Common myeloid progenitor, CD34-positive (primary cell): ENCODE measurements at regions of chr1 and their contacts with region 1.

Region 1: DNA sequence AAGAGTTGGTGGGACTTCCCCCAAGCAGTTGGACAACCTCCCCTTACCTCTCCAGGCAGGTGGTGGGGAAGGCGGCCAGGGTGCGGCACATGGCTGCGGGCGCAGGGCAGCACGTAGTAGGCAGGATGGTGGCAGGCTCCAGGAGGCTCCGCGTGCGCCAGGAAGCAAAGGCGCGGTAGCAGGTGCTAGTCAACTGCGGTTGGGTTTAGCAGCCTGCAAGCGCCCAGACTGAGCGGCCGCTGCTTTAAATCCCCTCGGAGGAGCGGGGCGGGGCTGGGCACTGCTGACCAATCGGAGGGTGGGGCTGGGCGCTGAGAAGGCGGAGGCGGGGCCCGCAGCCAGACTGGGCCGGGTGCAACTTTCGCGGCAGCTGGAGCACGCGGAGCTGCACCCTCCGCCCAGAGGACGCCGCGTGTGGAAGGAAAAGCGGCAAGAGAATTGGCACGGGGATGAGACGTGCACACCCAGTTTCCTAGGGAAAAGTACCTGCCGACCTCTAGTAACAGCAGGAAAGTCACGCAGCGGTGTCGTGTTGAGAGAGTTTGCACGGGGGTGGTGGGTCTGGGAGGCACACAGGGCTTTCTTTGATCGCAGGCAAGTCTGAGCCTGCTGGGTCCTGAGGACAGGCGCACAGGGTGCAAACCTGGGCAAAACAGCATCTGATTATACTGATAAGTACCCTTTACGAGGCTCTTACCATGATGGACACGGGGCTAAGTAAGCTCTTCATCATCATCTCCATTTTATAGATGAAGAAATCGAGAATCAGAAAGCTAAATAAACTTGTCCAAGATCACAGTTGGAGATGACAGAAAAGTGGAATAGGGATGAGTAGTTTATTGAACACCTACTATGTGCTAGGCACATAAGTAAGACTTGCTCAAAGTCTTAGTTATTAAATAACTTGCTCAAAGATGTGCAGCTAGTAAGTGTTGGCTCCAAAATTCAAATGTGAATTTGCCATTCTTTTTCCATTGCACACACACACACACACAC is at the start of gene RGS16:
- DNase-seq: peak; percentile 63 to 84 (median 82)
- H3K4me3 ChIP-seq: peak within 1 kb of the TSS in 6 of 7 experiments; percentile 16 to 69 (median 41)
- H3K27ac ChIP-seq: no peak within 1 kb of the TSS
- H3K4me1 ChIP-seq: peaks cover 0 to 16% (median 11%) of the 10 kb centered on the region in 4 experiments
- H3K27me3 ChIP-seq: peaks cover 0 to 21% (median 13%) of the 10 kb centered on the region in 5 experiments

Region 2: GRCh38 chr1:182568647-182569284 is 35.7 kb before region 1 on chr1:
- CTCF ChIA-PET with region 1: no interaction called
- POLR2A ChIA-PET with region 1: no interaction called
- DNase-seq: no peak
- H3K4me3 ChIP-seq: no peak overlapping the region
- H3K27ac ChIP-seq: no peak overlapping the region
- H3K4me1 ChIP-seq: no peaks in the 10 kb centered on the region
- H3K27me3 ChIP-seq: peaks cover 0 to 2% (median 0%) of the 10 kb centered on the region in 5 experiments

Region 3: DNA sequence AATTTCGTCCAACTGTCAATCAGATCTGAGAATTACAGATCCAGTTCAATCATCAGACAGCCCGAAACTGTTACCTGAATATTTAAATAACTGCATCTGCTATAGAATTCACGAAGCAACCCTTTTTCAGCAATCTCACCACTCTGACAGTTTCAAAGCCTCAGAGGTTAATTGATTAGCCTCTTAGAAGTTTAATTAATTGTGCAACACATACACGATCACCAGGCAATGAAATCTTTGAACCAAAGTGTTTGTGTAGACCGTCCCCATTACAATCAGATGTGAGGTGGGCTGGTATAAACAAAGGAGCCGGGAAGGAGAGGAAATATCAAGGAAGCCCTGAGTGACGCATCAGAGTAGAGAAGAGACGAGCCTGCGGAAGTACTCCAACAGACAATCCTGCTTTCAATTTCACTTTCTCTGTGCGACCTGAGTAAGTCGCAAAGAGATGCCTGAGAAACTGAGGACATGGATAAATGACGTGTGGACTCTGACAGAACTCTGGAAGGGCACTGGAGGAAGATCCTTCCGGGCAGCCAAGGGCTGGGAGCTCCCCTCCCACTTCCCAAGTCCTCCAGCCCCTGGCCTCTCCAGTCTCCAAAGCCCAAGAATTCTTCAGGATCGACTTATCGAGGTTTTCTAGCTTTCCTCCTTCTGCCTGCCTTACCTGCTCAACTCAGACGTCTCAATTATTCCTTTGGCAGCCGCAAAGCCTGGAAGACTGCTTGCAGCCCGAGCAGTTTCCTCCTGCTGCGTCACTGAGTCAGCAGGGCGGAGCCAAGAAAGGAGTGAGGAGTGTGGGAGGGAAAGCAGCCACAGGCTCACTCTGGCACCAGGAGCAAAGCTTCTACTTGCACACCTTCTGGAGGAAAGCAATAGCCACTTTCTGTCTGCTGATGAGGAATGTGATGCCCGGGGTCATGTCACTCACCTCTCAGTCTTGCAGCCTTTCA is 15.7 kb before region 1 on chr1 and contains the start of gene RNASEL:
- CTCF ChIA-PET with region 1: interaction called, 157 read pairs
- POLR2A ChIA-PET with region 1: no interaction called
- DNase-seq: peak; percentile 62 to 88 (median 81)
- H3K4me3 ChIP-seq: peak within 1 kb of the TSS; percentile 78 to 99 (median 96)
- H3K27ac ChIP-seq: peak within 1 kb of the TSS; percentile 86 to 95
- H3K4me1 ChIP-seq: peaks cover 0 to 19% (median 9%) of the 10 kb centered on the region in 4 experiments
- H3K27me3 ChIP-seq: no peaks in the 10 kb centered on the region

Region 4: DNA sequence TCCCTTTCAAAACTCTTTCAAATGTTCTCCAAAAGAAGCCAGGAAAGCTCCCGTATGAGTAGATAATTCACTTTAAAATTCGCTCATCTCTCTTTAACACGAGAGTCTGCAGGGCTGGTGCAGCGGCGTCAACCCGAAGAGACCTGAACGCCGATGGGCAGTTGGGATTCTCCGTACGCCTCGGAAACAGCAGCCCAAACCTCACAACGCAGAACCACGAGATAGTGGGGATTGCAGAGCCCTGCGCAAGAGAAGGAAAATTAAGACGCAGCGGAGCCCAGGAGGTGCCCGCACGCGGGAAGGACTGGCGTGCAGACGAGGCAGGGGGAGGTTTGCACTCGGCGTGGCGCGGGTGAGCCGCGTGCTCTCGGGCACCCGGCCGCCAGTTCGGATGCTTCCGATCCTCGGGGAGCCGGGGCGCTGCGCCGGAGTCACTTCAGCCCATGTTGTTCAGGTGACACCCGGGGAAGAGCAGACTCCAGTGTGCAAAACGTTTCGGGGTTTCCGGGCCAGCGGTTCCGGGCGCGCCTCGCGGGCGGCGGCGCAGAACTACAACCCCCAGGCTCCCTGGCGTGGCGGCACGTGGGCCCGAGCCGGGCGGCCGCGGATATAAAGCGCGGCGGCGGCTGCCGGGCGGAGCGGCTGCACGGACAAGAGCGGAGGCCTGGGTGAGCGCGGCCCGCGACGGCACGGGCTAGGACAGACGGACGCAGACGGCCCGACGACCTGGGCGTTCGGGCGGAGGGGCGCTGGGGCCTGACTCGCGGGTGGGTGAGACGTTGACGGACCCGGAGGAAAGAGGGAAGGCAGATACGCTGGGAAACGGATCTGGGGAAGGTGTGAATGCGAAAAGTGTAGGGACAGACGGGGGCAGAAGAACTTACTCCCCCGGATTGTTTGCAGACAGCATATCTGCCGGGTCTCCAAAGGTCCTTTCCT is 184.9 kb after region 1 on chr1 and contains the start of gene NPL:
- CTCF ChIA-PET with region 1: interaction called, 525 read pairs
- POLR2A ChIA-PET with region 1: interaction called, 4 read pairs
- DNase-seq: peak; percentile 66 to 77 (median 70)
- H3K4me3 ChIP-seq: peak within 1 kb of the TSS; percentile 51 to 74 (median 69)
- H3K27ac ChIP-seq: no peak within 1 kb of the TSS
- H3K4me1 ChIP-seq: peaks cover 1 to 15% (median 13%) of the 10 kb centered on the region in 4 experiments
- H3K27me3 ChIP-seq: peaks cover 0 to 9% (median 0%) of the 10 kb centered on the region in 5 experiments